Activated CD4-positive, alpha-beta memory T cell treated with anti-CD3 and anti-CD28 coated beads, Interleukin-2, amount 10 ng/mL, durations not matched to agents 7 days and 5 days (primary cell): ENCODE measurements at regions of chr12 and their contacts with region 1.

Region 1: GRCh38 chr12:6540181-6540877 is 6.0 kb downstream of the GAPDH start:
- DNase-seq: peak; percentile 70
- H3K4me3 Mint-ChIP-seq: peak overlapping the region; percentile 51
- H3K27ac Mint-ChIP-seq: peak overlapping the region; percentile 88
- H3K4me1 Mint-ChIP-seq: peaks cover 66% of the 10 kb centered on the region
- H3K27me3 Mint-ChIP-seq: no peaks in the 10 kb centered on the region

Region 2: DNA sequence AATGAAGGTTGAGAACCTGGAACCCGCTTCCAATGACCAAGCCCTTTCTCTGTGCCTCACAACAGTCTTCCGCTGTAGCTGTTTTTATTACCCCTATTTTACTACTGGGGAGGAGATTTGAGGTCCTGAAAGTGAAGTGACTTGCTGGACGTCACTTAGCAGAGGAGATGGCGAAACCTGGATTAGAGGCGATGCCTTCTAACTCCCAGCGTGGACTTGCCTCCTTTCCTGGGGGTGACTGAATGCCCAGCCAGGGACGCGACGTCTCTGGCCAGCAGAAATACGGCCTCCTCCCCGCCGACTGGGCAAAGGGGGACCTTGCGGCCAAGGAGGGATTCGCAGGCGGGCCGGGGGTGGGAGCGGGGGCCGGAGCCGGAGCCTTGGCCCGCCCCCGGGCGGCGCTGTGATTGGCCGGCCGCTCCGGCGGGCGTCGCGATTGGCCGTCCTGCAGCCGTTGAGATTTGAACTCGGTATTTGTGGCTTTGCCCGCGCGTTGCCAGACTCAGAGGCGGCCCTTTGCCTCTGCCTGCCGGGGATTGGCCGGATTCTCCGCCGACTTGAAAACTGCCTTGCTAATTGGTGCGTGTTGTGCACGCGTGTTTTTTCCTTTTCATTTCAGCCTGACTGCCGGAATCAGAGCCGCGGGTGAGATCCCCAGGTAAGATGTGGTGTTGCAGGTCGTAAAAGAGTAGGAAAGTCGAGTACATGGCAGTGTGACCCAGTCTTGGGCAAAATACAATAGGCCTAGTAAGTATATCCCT is 46.7 kb before region 1 on chr12 and contains the start of gene NCAPD2:
- CTCF ChIA-PET with region 1: interaction called, 17 read pairs
- POLR2A ChIA-PET with region 1: interaction called, 51 read pairs
- DNase-seq: peak; percentile 98
- H3K4me3 Mint-ChIP-seq: peak within 1 kb of the TSS; percentile 96
- H3K27ac Mint-ChIP-seq: peak within 1 kb of the TSS; percentile 98
- H3K4me1 Mint-ChIP-seq: peaks cover 44% of the 10 kb centered on the region
- H3K27me3 Mint-ChIP-seq: no peaks in the 10 kb centered on the region
- total RNA-seq, gene NCAPD2: 153 to 156 TPM

Region 3: DNA sequence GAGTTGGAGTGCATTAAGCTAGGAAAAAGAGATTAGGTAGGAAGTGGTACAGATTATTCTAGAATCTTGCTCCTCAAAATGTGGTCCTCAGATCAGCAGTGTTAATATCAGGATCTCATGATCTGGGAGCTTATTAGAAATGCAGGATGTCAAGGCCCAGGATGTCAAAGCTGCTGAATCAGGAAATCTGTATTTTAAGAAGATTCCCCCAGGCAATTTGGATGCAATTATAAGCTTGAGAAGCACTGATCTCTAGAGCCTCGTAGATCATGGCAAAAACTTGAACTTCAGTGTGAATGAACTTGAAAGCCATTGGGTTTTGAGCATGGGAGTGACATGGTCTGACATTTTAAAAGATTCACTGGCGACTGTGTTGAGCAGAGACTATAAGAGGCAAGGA is 39.9 kb before region 1 on chr12:
- CTCF ChIA-PET with region 1: interaction called, 17 read pairs
- POLR2A ChIA-PET with region 1: interaction called, 46 read pairs
- DNase-seq: no peak
- H3K4me3 Mint-ChIP-seq: no peak overlapping the region
- H3K27ac Mint-ChIP-seq: no peak overlapping the region
- H3K4me1 Mint-ChIP-seq: peaks cover 26% of the 10 kb centered on the region
- H3K27me3 Mint-ChIP-seq: no peaks in the 10 kb centered on the region

Region 4: DNA sequence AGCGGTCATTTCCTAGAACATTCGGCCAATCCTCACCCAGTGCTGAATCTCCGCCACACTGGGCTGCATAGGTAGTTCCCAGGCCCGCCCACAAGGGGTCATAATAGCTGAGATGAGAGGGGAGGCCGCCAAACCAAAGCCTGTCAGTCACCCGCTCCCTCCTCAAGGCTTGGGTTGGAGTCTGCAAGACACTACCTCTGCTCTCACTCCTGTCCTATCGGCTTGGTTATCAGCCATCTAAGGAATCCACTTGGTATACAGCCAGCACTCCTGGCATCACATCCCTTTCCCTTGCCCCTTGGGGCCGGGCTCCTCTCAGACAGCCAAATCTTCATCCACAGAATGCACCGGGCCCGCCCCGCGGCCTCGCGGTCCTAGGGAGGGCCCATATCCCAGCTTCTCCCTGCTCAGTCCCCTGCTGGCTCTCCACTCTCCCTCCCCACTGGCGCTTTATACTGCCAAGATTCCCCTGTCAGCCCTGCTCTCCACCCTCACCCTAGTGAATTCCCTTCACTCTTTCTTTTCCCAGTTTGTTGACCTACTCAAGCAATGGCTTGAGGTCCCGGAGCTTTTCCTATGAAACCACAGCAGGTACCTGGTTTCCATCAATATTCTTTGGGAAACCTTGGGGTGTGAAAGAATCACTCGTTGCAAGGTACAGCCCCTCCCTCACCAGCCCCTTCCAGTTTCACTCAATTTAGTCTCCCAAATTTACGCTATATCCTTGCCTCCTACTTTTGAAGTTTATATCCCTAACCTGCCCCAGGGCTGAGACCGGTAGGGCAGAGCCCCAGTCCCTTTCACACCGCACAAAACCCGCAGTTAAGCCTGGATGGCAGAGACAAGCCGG is 14.1 kb after region 1 on chr12:
- CTCF ChIA-PET with region 1: interaction called, 115 read pairs
- POLR2A ChIA-PET with region 1: interaction called, 201 read pairs
- DNase-seq: peak; percentile 80
- H3K4me3 Mint-ChIP-seq: peak overlapping the region; percentile 86
- H3K27ac Mint-ChIP-seq: peak overlapping the region; percentile 66
- H3K4me1 Mint-ChIP-seq: peaks cover 55% of the 10 kb centered on the region
- H3K27me3 Mint-ChIP-seq: no peaks in the 10 kb centered on the region

Region 5: DNA sequence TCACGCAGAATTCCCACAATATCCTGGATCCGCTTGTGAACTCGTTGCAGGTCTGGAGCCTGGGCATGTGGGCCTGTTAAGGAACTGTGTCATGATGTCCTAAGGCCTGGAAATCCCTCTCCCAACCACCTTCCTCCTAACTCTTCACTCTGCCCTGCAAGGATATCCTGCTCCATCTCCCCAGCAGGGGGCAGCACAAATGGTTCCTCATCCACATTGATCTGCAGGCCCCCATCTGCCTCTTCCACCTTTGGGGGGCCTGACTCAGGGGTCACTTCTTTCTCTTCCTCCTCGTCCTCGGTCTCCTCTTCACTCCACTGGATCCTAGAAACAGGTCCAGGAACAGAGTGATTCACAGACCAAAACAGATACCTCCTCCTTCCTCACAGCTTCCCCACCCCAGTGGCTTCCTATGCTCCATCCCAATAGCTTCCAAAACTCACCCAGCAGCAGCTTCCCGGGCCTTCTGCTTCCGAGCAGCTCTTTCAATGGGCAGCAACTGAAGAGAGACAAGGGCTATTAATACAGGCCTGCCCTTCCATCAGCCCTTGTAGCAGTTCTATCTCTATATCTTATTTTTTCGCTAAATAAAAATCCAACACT is 23.2 kb after region 1 on chr12:
- CTCF ChIA-PET with region 1: interaction called, 13 read pairs
- POLR2A ChIA-PET with region 1: interaction called, 201 read pairs
- DNase-seq: peak; percentile 70
- H3K4me3 Mint-ChIP-seq: no peak overlapping the region
- H3K27ac Mint-ChIP-seq: no peak overlapping the region
- H3K4me1 Mint-ChIP-seq: peaks cover 35% of the 10 kb centered on the region
- H3K27me3 Mint-ChIP-seq: no peaks in the 10 kb centered on the region